ENCODE measurements at regions of chr9 and their contacts with region 1.

Region 1: DNA sequence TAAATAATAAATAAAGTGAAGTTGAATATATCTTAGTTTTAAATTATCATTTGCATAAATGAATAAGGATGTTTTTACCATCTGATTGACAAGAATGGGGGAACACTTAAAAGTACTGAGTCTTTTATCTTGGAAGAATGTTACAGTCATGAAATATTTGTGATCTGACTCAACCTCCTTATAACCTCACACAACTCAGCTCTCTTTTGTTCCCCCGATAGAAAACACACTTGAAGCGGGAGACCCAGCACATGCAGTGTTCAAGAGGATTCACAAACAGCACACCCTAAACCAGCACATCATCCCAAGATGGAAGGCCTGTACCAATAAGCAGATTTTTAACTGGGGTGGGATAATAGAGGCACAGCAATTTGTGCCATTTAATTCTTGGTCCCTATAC is 15.5 kb downstream of the BAAT start:
- DNase-seq: no peak
- CTCF ChIP-seq: no peak

Region 2: DNA sequence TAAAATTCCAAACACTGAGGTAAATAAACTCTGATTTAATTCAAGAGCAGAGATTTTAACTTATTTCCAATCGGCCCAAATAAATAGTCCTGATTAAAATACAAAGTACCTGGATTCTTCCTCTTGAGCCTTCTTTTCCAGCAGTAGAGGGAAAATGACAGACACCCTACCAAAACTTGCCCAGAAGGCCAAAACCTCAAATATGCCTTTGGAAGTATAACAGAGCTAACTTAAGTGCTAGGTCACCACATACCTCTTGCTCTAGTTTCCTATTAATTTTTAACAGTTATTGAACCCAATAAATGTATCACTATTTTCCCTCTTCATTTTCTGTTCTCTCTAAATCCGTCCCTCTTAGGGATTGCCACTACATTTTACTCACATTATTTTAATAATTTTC is 14.1 kb after region 1 on chr9:
- CTCF ChIA-PET with region 1: interaction called, 38 read pairs
- POLR2A ChIA-PET with region 1: no interaction called
- DNase-seq: no peak
- CTCF ChIP-seq: no peak